Calu3 (cell line): ENCODE measurements at regions of chr6 and their contacts with region 1.

Region 1: GRCh38 chr6:52162940-52163908 is 23.0 kb upstream of the IL17A start:
- DNase-seq: no peak
- H3K4me3 Mint-ChIP-seq: no peak overlapping the region
- H3K27ac Mint-ChIP-seq: no peak overlapping the region
- H3K4me1 Mint-ChIP-seq: peaks cover 23% of the 10 kb centered on the region
- H3K27me3 Mint-ChIP-seq: no peaks in the 10 kb centered on the region
- CTCF ChIP-seq: peak; percentile 59

Region 2: DNA sequence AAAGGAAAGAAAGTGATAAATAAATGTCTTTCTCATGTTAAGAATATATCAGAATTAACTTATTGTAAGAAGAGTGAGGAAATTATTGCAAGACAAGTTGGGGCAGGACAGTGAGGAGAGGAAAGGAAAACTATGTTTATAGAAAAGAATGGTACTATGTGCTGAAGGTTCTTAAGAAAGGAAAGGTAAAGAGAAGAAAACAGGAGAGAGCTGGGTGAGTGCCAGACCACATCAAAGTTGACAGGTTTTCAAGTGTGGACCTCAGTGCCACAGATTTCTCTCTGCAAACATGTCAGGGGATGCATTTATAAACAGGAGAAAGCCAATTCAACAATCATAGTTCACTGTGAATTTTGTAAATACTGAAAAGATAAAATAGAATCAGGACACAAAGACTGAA is 515.0 kb before region 1 on chr6:
- CTCF ChIA-PET with region 1: no interaction called
- intact Hi-C with region 1: no loop called
- DNase-seq: no peak
- H3K4me3 Mint-ChIP-seq: no peak overlapping the region
- H3K27ac Mint-ChIP-seq: no peak overlapping the region
- H3K4me1 Mint-ChIP-seq: peaks cover 10% of the 10 kb centered on the region
- H3K27me3 Mint-ChIP-seq: no peaks in the 10 kb centered on the region
- CTCF ChIP-seq: no peak

Region 3: DNA sequence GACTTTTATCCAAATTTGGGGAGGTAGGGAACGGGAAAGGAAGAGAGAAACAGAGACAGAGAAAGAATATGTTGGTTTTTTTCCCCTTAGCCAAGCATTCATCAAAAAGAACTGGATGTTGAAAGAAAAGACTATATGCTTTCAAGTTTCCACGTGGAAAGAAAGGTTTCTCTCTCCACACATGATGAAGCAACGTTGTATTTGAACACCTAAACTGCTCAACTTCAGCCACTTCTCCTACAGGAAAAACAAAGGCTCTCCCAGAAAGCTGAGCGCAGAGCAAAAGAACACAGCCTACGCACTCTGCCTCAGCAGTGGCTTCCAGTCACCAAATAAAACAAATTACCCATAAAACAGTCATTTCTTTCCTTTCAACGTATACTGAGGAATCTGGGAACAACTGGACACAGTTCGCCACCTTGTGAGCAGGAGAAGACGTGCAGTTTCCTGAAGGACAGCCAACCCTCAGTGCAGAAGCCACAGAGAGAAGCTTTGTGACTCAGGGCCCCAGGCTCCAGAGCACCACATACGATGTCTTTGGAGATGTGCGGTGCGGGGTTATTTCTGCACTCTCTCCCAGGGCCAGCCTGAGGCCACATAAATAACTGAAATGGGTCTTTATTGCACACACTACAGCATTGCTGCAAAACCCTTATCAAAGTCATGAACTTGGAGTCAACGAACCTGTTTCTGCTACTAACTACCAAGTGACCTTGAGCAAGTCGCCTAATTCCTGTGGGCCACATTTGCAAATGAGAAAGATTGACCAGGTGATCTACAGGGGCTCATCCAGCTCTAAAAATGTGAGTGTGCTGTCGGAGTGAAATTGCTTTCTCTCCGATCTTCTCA is 71.0 kb after region 1 on chr6:
- CTCF ChIA-PET with region 1: interaction called, 11 read pairs
- intact Hi-C with region 1: loop called (anchors 1 kb)
- DNase-seq: peak; percentile 61
- H3K4me3 Mint-ChIP-seq: no peak overlapping the region
- H3K27ac Mint-ChIP-seq: no peak overlapping the region
- H3K4me1 Mint-ChIP-seq: peaks cover 7% of the 10 kb centered on the region
- H3K27me3 Mint-ChIP-seq: peaks cover 49% of the 10 kb centered on the region
- CTCF ChIP-seq: peak; percentile 64

Region 4: DNA sequence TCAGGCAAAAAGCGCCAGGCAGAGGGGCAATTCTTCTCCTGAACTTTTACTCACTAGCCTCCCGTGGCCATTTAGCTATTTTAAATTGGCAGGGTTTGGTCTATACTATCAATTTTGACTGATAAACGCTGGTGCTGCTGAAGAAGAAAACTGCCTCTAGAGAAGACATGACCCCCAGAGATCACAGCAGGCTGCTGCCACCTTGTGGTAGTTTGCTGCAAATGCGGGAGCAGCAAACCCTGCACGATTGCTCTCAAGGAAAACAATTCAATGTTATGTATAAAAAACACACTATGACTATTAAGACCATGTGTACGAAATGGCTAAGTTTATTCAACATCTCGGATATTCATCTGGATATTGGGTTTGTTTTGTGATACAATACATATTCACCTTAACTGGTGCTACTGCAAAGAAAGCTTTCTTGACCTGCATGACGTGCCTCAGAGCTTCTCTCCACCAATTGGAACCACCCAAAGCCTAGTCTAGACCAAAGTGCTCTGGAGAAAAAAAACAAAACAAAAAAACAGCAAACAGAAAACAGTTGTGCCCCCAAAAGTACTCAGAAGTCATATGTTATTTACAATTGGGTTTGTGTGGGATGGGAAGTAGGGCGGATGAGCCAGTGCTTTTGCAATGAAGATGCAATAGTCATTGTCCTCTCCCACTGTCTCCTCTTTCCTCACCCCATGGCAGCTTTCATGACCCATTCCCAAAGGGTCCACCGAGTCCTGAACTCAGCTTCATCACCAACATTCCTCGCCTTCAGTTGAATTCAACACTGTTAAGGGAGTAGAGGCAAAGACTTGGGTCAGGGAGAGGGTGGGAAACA is 100.7 kb after region 1 on chr6:
- CTCF ChIA-PET with region 1: no interaction called
- intact Hi-C with region 1: loop called (anchors 1 kb)
- DNase-seq: peak; percentile 70
- H3K4me3 Mint-ChIP-seq: no peak overlapping the region
- H3K27ac Mint-ChIP-seq: no peak overlapping the region
- H3K4me1 Mint-ChIP-seq: no peaks in the 10 kb centered on the region
- H3K27me3 Mint-ChIP-seq: no peaks in the 10 kb centered on the region
- CTCF ChIP-seq: peak; percentile 85

Region 5: DNA sequence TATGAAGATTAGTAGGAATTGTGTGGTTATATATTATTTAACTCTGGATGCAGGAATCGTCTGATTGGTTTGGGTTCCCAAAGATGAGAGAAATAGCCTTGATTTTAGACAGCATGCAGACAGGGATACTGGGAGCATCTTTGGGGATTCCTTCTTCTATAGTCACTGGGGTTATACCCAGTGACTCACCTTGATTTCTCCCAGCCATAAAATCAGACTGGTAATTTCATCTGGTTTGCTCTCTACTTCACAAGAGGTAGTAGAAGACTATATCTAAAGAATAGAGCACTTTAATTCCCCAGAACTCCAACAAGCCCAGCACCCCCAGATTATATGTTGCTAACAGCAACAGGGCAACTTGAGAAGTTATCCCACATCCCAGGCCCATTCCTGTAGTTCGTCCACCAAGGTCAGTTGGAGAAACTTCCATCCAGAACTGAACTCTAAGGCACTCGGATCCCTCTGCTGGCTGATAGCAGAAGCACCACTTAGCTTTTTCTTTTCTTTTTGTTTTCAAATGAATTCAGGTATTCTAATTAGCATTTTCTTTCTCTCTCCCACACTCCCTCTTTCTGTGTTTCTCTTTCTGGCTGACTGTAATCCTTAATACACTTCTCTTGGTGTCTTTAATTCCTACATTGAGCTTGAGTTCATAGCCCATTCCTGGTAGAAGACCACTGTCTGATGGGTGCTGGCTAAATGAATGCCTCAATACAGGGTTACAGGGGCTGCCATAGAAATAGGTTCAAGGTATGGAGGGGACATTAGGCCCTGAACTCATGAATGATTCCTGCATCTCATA is 236.5 kb after region 1 on chr6:
- CTCF ChIA-PET with region 1: no interaction called
- intact Hi-C with region 1: loop called (anchors 1 kb)
- DNase-seq: peak; percentile 45
- H3K4me3 Mint-ChIP-seq: no peak overlapping the region
- H3K27ac Mint-ChIP-seq: no peak overlapping the region
- H3K4me1 Mint-ChIP-seq: peaks cover 36% of the 10 kb centered on the region
- H3K27me3 Mint-ChIP-seq: no peaks in the 10 kb centered on the region
- CTCF ChIP-seq: peak; percentile 71